Panc1 (cell line): ENCODE measurements at regions of chr1 and their contacts with region 1.

Region 1: DNA sequence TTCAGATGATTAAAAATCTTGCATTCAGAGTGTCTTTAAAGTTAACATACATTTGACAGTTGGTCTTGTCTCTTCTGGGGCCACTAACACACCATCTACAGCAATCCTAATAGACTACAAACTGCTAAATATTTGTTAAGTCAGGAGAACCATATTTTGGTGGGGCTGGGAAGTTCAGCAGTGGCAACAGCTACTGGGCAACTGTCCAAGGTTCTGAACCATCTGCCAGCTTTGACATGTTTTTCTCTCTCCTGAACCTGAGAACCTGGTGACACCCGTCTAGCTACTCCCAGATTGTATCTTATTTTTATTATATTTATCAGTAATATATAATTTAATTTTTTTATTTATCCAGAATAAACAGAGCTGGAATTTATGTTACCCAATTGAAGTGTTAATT is 199.0 kb upstream of the DPYD start:
- DNase-seq: no peak
- ATAC-seq: no peak
- H3K4me3 ChIP-seq: no peak overlapping the region
- H3K27ac ChIP-seq: no peak overlapping the region
- H3K4me1 ChIP-seq: no peaks in the 10 kb centered on the region
- H3K27me3 ChIP-seq: no peaks in the 10 kb centered on the region
- CTCF ChIP-seq: no peak

Region 2: GRCh38 chr1:98098473-98098872 is 21.3 kb before region 1 on chr1:
- CTCF ChIA-PET with region 1: no interaction called
- POLR2A ChIA-PET with region 1: interaction called, 14 read pairs
- in situ Hi-C with region 1: no loop called
- intact Hi-C with region 1: no loop called
- DNase-seq: no peak
- ATAC-seq: no peak; the same call in 1 of the 2 replicates
- H3K4me3 ChIP-seq: no peak overlapping the region
- H3K27ac ChIP-seq: no peak overlapping the region
- H3K4me1 ChIP-seq: peaks cover 7% of the 10 kb centered on the region
- H3K27me3 ChIP-seq: no peaks in the 10 kb centered on the region
- CTCF ChIP-seq: no peak

Region 3: DNA sequence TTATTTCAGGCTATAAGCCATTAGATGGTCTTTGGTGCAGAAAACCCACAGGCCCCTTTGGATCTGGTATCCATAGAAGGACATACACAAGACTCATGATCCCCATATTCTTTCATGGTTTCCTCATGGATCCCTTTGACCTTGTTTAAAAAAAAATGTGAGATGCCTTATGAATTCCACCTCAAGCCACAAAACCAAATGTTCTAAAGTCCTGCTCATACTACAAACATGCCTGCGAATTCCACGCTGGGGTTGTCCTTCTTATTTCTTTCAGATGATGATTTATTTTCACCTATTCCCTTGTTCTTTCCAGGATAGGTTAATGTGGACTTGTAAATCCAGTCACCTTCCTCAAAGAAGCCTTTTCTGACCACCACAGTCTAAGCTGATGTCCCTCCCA is 58.0 kb after region 1 on chr1:
- CTCF ChIA-PET with region 1: no interaction called
- POLR2A ChIA-PET with region 1: no interaction called
- in situ Hi-C with region 1: no loop called
- intact Hi-C with region 1: loop called (anchors 10 kb)
- DNase-seq: no peak
- ATAC-seq: no peak
- H3K4me3 ChIP-seq: no peak overlapping the region
- H3K27ac ChIP-seq: no peak overlapping the region; the same call in 1 of the 2 replicates
- H3K4me1 ChIP-seq: no peaks in the 10 kb centered on the region
- H3K27me3 ChIP-seq: no peaks in the 10 kb centered on the region
- CTCF ChIP-seq: no peak